Activated CD4-positive, alpha-beta memory T cell treated with anti-CD3 and anti-CD28 coated beads, Interleukin-2, amount 10 ng/mL, durations not matched to agents 7 days and 5 days (primary cell): ENCODE measurements at regions of chr1 and their contacts with region 1.

Region 1: DNA sequence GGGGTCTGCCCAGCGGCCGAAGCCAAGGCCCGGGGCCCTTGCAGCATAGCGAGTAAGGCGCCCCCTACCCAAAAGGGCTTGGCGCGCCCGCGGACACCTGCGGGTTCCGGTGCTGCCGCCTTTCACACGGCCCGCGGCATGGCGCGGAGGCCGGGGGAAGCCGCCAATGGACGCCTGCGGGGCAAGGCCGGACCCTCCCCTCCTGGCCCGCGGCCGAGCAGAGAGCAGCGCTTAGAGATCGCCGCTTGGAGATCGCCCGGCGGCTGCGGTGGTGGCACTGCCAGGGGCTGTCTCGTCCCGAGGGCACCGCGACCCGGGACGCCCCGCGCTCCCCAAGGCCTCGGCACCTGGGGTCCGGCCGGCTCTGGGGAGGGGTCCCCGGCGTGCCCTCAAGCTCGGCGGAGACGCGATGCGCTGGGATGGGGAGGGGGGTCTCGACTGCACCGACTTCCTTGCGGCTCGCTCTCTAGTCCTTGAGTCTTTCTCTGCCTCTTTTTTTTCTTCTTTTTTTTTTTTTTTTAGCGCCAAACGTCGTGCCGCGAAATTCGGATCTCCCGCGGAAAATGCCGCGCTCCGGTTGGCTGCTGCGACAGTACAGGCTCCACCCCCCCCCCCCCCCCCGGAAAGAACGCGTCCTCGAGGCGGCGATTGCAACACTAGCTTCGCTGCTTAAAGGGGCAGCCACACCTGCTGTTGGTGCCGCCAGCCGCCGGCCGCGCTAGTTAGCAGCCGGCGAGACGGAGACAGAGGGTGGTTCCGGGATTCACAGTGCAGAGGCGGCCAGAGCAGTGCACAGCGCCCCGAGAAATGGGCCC is at the start of gene E2F2:
- DNase-seq: peak; percentile 88
- H3K4me3 Mint-ChIP-seq: peak within 1 kb of the TSS; percentile 99
- H3K27ac Mint-ChIP-seq: peak within 1 kb of the TSS; percentile 97
- H3K4me1 Mint-ChIP-seq: peaks cover 72% of the 10 kb centered on the region
- H3K27me3 Mint-ChIP-seq: peaks cover 2% of the 10 kb centered on the region
- total RNA-seq, gene E2F2: 93.4 to 98.9 TPM

Region 2: DNA sequence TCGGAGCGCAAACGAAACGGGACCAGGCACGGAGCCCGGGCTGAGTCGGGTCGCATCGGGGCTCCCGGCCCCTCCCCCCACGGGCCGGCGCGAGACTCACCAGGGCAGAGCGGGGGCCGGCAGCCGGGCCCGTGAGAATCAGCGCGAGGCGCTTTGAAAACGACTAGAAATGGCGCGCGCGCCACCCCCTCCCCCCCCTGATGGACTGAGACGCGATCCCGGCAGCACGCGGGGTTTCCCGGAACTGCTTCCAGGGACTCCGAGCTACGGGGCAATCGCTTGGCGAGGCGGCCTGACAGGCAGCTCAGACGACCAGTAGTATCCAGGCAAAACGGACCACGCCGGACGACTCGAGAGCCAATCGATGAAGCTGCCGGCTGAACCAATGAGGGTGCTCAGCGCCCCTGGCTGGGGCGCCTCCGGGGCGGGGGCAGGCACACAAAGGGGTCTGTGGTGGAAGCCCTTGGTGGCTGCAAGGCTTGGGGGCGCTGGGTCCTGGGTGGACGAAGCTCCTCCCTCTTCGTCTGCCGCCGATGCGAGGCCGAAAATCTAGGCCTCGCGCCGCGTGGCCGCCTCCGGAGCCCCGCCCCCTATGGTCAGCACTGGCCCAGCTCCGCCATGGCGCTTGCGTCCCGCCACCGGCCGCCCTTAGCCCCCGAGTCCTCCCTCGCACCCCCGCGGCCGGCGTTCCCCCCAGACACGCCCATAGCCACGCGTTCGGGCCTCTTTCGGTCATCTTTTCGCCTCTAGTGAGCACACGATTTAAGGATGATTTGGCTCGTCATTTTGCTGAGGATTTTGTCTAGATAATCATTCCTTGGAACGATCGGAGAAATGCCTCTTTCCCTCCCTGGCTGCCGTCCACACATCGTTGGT is 186.6 kb before region 1 on chr1 and contains the start of gene HNRNPR:
- CTCF ChIA-PET with region 1: interaction called, 6 read pairs
- POLR2A ChIA-PET with region 1: interaction called, 21 read pairs
- DNase-seq: peak; percentile 99
- H3K4me3 Mint-ChIP-seq: peak within 1 kb of the TSS; percentile 82
- H3K27ac Mint-ChIP-seq: peak within 1 kb of the TSS; percentile 92
- H3K4me1 Mint-ChIP-seq: peaks cover 38% of the 10 kb centered on the region
- H3K27me3 Mint-ChIP-seq: no peaks in the 10 kb centered on the region
- total RNA-seq, gene HNRNPR: 175 to 179 TPM

Region 3: DNA sequence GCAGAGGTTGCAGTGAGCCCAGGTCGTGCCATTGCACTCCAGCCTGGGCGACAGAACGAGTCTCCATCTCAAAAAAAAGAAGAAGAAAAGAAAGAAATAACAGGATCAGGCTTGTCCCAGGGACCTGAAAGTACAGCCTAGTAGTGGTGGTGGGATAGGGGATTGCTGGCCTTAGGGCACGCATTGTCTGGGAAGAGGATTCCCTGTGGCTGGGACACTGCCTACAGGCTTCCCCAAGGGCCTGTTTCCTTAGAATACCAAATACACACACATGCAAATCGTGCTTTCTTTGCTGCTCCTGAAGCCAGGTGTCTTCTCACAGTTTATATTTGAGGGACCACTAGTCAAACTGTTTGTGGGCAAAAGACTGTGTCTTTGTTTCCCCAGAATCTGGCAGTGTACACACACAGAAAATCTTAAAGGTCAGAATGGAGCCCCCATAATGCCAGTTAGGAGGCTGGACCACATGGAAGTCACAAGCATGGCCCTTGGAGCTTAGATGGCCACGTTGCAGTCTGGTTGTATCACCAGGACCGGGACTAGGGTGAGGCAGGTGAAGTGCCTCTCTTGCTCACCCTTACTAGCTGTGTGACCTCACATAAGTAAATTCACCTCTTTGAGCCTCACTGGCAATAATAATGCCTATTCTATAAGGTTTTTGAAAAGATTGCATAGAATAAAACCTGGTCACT is 34.3 kb before region 1 on chr1:
- CTCF ChIA-PET with region 1: interaction called, 192 read pairs
- POLR2A ChIA-PET with region 1: interaction called, 122 read pairs
- DNase-seq: no peak
- H3K4me3 Mint-ChIP-seq: no peak overlapping the region
- H3K27ac Mint-ChIP-seq: no peak overlapping the region
- H3K4me1 Mint-ChIP-seq: peaks cover 5% of the 10 kb centered on the region
- H3K27me3 Mint-ChIP-seq: peaks cover 11% of the 10 kb centered on the region

Region 4: GRCh38 chr1:23514111-23514679 is 16.8 kb before region 1 on chr1:
- CTCF ChIA-PET with region 1: interaction called, 11 read pairs
- POLR2A ChIA-PET with region 1: interaction called, 121 read pairs
- DNase-seq: no peak
- H3K4me3 Mint-ChIP-seq: no peak overlapping the region
- H3K27ac Mint-ChIP-seq: no peak overlapping the region
- H3K4me1 Mint-ChIP-seq: peaks cover 4% of the 10 kb centered on the region
- H3K27me3 Mint-ChIP-seq: no peaks in the 10 kb centered on the region

Region 5: GRCh38 chr1:23619299-23620188 is 88.6 kb after region 1 on chr1:
- CTCF ChIA-PET with region 1: interaction called, 3 read pairs
- POLR2A ChIA-PET with region 1: interaction called, 35 read pairs
- DNase-seq: peak; percentile 76
- H3K4me3 Mint-ChIP-seq: peak overlapping the region; percentile 67
- H3K27ac Mint-ChIP-seq: peak overlapping the region; percentile 70
- H3K4me1 Mint-ChIP-seq: peaks cover 53% of the 10 kb centered on the region
- H3K27me3 Mint-ChIP-seq: peaks cover 15% of the 10 kb centered on the region

Region 6: DNA sequence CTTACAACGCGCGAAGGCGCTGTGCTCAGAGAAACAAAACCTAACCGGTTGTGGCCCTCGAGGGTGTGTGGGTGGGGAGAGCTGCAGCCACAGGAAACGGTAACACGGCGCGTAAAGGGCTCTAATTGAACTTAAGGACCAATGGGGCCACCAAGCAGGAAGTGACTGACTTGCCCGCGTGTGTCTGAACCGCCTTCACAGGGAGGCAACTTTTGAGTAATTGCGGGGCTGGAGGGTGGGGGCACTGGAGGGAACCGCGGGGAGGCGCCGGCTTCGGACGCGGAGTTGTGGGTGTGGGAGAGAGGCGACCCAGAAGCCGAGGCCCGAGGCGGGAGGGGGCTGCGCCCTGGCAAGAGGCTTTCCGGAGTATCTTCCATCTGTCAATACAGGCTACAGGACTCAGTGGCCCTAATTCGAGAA is 428.1 kb after region 1 on chr1:
- CTCF ChIA-PET with region 1: no interaction called
- POLR2A ChIA-PET with region 1: interaction called, 11 read pairs
- DNase-seq: peak; percentile 95
- H3K4me3 Mint-ChIP-seq: peak overlapping the region; percentile 100
- H3K27ac Mint-ChIP-seq: peak overlapping the region; percentile 100
- H3K4me1 Mint-ChIP-seq: peaks cover 55% of the 10 kb centered on the region
- H3K27me3 Mint-ChIP-seq: peaks cover 2% of the 10 kb centered on the region